MCF 10A (cell line): ENCODE measurements at regions of chr10 and their contacts with region 1.

Region 1: DNA sequence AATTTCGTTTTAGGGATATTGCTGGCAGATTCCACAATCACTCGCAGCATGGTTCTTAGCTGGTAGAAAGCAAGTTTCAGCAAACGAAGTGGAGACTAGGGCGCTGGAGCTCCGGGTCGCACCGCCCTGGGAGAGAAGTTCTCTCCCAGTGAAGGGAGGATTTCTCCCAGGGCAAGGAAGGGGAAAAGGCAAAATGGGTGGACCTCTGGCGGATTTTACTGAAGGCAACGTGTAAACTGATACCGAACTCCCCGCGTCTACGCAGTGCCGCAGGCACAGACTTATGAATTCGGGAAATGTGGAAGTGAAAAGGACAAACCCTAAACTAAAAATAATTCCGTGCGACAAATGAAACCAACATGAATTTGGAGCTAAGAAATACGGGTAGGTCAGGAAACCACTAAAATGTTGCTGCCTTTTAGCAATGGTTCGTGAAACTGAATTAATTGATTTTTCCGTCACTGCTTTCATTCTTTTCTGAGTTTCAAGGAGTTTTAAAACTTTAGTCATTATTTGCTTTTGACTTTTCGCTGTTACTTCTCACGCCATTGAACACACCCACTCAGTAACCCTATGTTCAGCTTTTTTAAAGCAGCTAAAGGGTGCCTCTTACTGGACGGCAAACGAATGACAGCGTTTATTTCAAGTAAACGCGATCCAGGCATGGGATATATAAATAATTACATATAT is at the start of gene MYOF:
- DNase-seq: peak; percentile 89
- H3K4me3 Mint-ChIP-seq: peak within 1 kb of the TSS; percentile 95
- H3K27ac Mint-ChIP-seq: peak within 1 kb of the TSS; percentile 89
- H3K4me1 Mint-ChIP-seq: peaks cover 21% of the 10 kb centered on the region
- H3K27me3 Mint-ChIP-seq: no peaks in the 10 kb centered on the region
- CTCF ChIP-seq: peak; percentile 45
- total RNA-seq, gene MYOF: 167 and 181 TPM in 2 replicates

Region 2: GRCh38 chr10:93352638-93353383 is 129.5 kb before region 1 on chr10:
- CTCF ChIA-PET with region 1: interaction called, 53 read pairs
- POLR2A ChIA-PET with region 1: interaction called, 5 read pairs
- intact Hi-C with region 1: no loop called
- DNase-seq: peak; percentile 46
- H3K4me3 Mint-ChIP-seq: no peak overlapping the region
- H3K27ac Mint-ChIP-seq: no peak overlapping the region
- H3K4me1 Mint-ChIP-seq: no peaks in the 10 kb centered on the region
- H3K27me3 Mint-ChIP-seq: no peaks in the 10 kb centered on the region
- CTCF ChIP-seq: peak; percentile 51

Region 3: GRCh38 chr10:93383562-93383981 is 98.7 kb before region 1 on chr10:
- CTCF ChIA-PET with region 1: interaction called, 498 read pairs
- POLR2A ChIA-PET with region 1: interaction called, 371 read pairs
- intact Hi-C with region 1: loop called (anchors 2 kb)
- DNase-seq: peak; percentile 49
- H3K4me3 Mint-ChIP-seq: peak overlapping the region; percentile 45
- H3K27ac Mint-ChIP-seq: peak overlapping the region; percentile 85
- H3K4me1 Mint-ChIP-seq: peaks cover 41% of the 10 kb centered on the region
- H3K27me3 Mint-ChIP-seq: no peaks in the 10 kb centered on the region
- CTCF ChIP-seq: no peak

Region 4: GRCh38 chr10:93445097-93445960 is 37.0 kb before region 1 on chr10:
- CTCF ChIA-PET with region 1: interaction called, 139 read pairs
- POLR2A ChIA-PET with region 1: interaction called, 2,342 read pairs
- intact Hi-C with region 1: no loop called
- DNase-seq: peak; percentile 99
- H3K4me3 Mint-ChIP-seq: peak overlapping the region; percentile 38
- H3K27ac Mint-ChIP-seq: peak overlapping the region; percentile 99
- H3K4me1 Mint-ChIP-seq: peaks cover 53% of the 10 kb centered on the region
- H3K27me3 Mint-ChIP-seq: no peaks in the 10 kb centered on the region
- CTCF ChIP-seq: no peak

Region 5: GRCh38 chr10:93471110-93471651 is 11.1 kb before region 1 on chr10:
- CTCF ChIA-PET with region 1: interaction called, 178 read pairs
- POLR2A ChIA-PET with region 1: interaction called, 2,342 read pairs
- intact Hi-C with region 1: loop called (anchors 1 kb)
- DNase-seq: peak; percentile 87
- H3K4me3 Mint-ChIP-seq: peak overlapping the region; percentile 44
- H3K27ac Mint-ChIP-seq: peak overlapping the region; percentile 85
- H3K4me1 Mint-ChIP-seq: peaks cover 50% of the 10 kb centered on the region
- H3K27me3 Mint-ChIP-seq: no peaks in the 10 kb centered on the region
- CTCF ChIP-seq: no peak

Region 6: DNA sequence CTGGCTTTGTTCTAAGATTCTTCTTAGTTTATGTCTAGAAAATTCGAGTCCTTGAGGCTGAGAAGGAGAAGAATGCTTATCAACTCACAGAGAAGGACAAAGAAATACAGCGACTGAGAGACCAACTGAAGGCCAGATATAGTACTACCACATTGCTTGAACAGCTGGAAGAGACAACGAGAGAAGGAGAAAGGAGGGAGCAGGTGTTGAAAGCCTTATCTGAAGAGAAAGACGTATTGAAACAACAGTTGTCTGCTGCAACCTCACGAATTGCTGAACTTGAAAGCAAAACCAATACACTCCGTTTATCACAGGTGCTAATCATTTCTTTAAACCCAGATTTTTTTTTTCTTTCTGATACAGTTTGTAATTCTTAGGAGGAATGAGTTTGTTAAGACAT is 20.8 kb after region 1 on chr10:
- CTCF ChIA-PET with region 1: interaction called, 4 read pairs
- POLR2A ChIA-PET with region 1: interaction called, 15 read pairs
- intact Hi-C with region 1: no loop called
- DNase-seq: no peak
- H3K4me3 Mint-ChIP-seq: no peak overlapping the region
- H3K27ac Mint-ChIP-seq: no peak overlapping the region
- H3K4me1 Mint-ChIP-seq: peaks cover 27% of the 10 kb centered on the region
- H3K27me3 Mint-ChIP-seq: no peaks in the 10 kb centered on the region
- CTCF ChIP-seq: no peak

Region 7: DNA sequence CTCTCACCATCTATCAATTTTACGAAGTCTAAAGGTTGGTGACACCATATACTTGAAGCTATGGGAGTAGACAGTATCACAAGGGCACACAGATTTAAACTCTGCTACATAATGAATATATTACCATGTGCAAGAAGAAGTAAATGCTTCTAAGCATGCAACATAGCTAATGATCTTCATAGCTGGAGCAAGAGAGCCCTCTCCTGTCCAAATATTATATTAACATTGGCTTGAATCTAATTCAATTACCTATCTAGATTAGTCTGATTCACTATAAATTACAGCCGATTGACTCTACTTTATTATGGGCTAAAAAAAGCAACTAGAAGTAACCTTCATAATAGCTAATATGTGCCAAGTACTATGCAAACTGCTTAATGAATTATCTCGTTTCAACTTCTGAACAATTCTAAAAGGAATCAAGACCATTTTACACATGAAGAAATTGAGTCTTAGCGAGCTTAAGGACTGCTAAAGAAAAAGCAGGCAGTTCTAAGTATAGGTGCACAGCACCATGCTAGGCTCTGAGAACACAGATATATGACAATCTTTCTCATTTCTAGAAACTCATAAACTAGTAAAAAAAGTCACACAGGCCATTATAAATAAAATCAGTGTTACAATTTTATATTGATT is 198.2 kb after region 1 on chr10:
- CTCF ChIA-PET with region 1: interaction called, 10 read pairs
- POLR2A ChIA-PET with region 1: interaction called, 3 read pairs
- intact Hi-C with region 1: no loop called
- DNase-seq: peak; percentile 55
- H3K4me3 Mint-ChIP-seq: no peak overlapping the region
- H3K27ac Mint-ChIP-seq: no peak overlapping the region
- H3K4me1 Mint-ChIP-seq: no peaks in the 10 kb centered on the region
- H3K27me3 Mint-ChIP-seq: no peaks in the 10 kb centered on the region
- CTCF ChIP-seq: peak; percentile 60